ENCODE measurements at regions of chr18 and their contacts with region 1.

Region 1: DNA sequence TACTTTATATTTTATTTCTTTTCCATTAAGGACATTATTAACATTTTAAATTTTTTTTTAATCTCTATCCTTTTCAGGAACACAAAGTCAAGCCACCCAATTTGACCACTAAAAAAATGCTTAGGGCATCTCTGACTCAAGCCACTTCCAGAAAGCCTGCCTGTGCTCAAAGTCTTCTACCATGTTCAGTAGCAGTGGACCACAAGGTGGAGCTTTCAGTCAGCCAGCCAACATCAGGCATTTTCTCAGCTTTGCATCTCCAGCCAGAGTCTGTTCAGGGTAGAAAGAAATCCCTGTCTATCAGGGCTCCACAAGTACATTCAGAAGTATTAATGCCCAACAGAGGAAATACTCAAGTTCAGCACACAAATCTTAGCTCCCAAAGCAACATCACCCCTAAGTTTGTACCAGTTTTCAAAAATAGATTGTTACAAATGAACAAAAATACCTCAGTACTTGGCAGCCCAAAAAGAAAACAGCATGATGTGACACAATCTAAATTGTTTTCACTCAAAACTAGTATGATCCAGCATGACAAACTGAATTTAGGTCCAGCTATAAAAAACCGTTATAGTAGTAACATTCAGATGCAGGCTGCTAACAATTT is 37.6 kb downstream of the C18orf63 start:
- DNase-seq: no peak

Region 2: DNA sequence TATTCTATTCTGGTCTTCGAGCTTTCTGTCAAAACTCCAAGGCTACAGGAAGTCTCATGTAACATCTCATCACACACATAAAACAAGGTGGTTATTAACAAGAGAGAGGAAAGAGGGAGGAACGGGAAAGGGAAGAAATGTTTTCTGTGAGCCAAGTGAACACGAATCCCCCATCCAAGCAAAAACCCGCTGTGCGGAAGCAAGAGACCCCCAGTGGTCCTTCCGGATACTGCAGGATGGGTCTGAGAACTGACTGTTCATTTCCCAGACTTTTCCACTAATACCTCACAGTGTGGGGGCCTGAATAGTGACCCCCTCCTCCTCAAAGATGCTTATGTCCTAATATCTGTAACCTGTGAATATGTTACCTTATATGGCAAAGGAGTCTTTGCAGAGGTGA is 122.9 kb after region 1 on chr18:
- intact Hi-C with region 1: loop called (anchors 1 kb)
- DNase-seq: no peak

Region 3: GRCh38 chr18:74551936-74552555 is 198.8 kb after region 1 on chr18:
- intact Hi-C with region 1: loop called (anchors 1 kb)
- DNase-seq: peak; percentile 84

Measured in cardiac septum (tissue), 1 donor.